ENCODE measurements at regions of chr10 and their contacts with region 1.

Region 1: GRCh38 chr10:125048101-125048864 is 106.4 kb downstream of the ZRANB1 start:
- DNase-seq: peak; percentile 57
- ATAC-seq: peak; percentile 96
- H3K4me3 ChIP-seq: no peak overlapping the region
- H3K27ac ChIP-seq: no peak overlapping the region; the same call in 1 of the 2 replicates
- H3K4me1 ChIP-seq: peaks cover 26% of the 10 kb centered on the region
- H3K27me3 ChIP-seq: no peaks in the 10 kb centered on the region
- CTCF ChIP-seq: peak; percentile 98

Region 2: GRCh38 chr10:125060826-125061556 is 12.7 kb after region 1 on chr10:
- CTCF ChIA-PET with region 1: interaction called, 11 read pairs
- POLR2A ChIA-PET with region 1: no interaction called
- in situ Hi-C with region 1: no loop called
- intact Hi-C with region 1: no loop called
- DNase-seq: no peak
- ATAC-seq: peak; percentile 82
- H3K4me3 ChIP-seq: no peak overlapping the region
- H3K27ac ChIP-seq: no peak overlapping the region
- H3K4me1 ChIP-seq: peaks cover 38% of the 10 kb centered on the region
- H3K27me3 ChIP-seq: no peaks in the 10 kb centered on the region
- CTCF ChIP-seq: peak; percentile 93

Region 3: GRCh38 chr10:125144693-125145623 is 96.7 kb after region 1 on chr10:
- CTCF ChIA-PET with region 1: interaction called, 4 read pairs
- POLR2A ChIA-PET with region 1: no interaction called
- in situ Hi-C with region 1: no loop called
- intact Hi-C with region 1: loop called (anchors 5 kb)
- DNase-seq: no peak
- ATAC-seq: peak; percentile 83
- H3K4me3 ChIP-seq: no peak overlapping the region
- H3K27ac ChIP-seq: no peak overlapping the region
- H3K4me1 ChIP-seq: peaks cover 57% of the 10 kb centered on the region
- H3K27me3 ChIP-seq: no peaks in the 10 kb centered on the region
- CTCF ChIP-seq: no peak; the same call in 1 of the 2 replicates

Region 4: GRCh38 chr10:125565046-125565445 is 516.8 kb after region 1 on chr10:
- CTCF ChIA-PET with region 1: no interaction called
- POLR2A ChIA-PET with region 1: no interaction called
- in situ Hi-C with region 1: no loop called
- intact Hi-C with region 1: loop called (anchors 5 kb)
- DNase-seq: no peak
- ATAC-seq: no peak
- H3K4me3 ChIP-seq: no peak overlapping the region
- H3K27ac ChIP-seq: no peak overlapping the region
- H3K4me1 ChIP-seq: no peaks in the 10 kb centered on the region
- H3K27me3 ChIP-seq: peaks cover 13% of the 10 kb centered on the region
- CTCF ChIP-seq: no peak

Measured in Panc1 (cell line).